CD8-positive, alpha-beta T cell (primary cell): ENCODE measurements at regions of chr1 and their contacts with region 1.

Region 1: GRCh38 chr1:64966158-64966971 is at the start of gene JAK1:
- DNase-seq: peak; percentile 77 to 95 (median 92)
- ATAC-seq: peak; percentile 83
- H3K4me3 ChIP-seq: peak within 1 kb of the TSS; percentile 81 to 95
- H3K4me3 Mint-ChIP-seq: peak within 1 kb of the TSS; percentile 92
- H3K27ac ChIP-seq: peak within 1 kb of the TSS; percentile 87 to 97
- H3K27ac Mint-ChIP-seq: peak within 1 kb of the TSS; percentile 97
- H3K4me1 ChIP-seq: peaks cover 51% of the 10 kb centered on the region
- H3K4me1 Mint-ChIP-seq: peaks cover 51% of the 10 kb centered on the region
- H3K27me3 ChIP-seq: no peaks in the 10 kb centered on the region
- H3K27me3 Mint-ChIP-seq: no peaks in the 10 kb centered on the region
- CTCF ChIP-seq: no peak
- total RNA-seq, gene JAK1: 280 to 298 TPM

Region 2: GRCh38 chr1:64864018-64864940 is 102.1 kb before region 1 on chr1:
- CTCF ChIA-PET with region 1: no interaction called
- POLR2A ChIA-PET with region 1: interaction called, 16 read pairs
- intact Hi-C with region 1: loop called in 1 of 2 experiments (anchors 5 kb)
- DNase-seq: peak; percentile 11 to 92 (median 57)
- ATAC-seq: peak; percentile 82
- H3K4me3 ChIP-seq: no peak overlapping the region
- H3K4me3 Mint-ChIP-seq: peak overlapping the region; percentile 37
- H3K27ac ChIP-seq: peak overlapping the region in 1 of 2 experiments; percentile 83
- H3K27ac Mint-ChIP-seq: peak overlapping the region; percentile 79
- H3K4me1 ChIP-seq: peaks cover 19% of the 10 kb centered on the region
- H3K4me1 Mint-ChIP-seq: peaks cover 44% of the 10 kb centered on the region
- H3K27me3 ChIP-seq: no peaks in the 10 kb centered on the region
- H3K27me3 Mint-ChIP-seq: no peaks in the 10 kb centered on the region
- CTCF ChIP-seq: no peak

Region 3: DNA sequence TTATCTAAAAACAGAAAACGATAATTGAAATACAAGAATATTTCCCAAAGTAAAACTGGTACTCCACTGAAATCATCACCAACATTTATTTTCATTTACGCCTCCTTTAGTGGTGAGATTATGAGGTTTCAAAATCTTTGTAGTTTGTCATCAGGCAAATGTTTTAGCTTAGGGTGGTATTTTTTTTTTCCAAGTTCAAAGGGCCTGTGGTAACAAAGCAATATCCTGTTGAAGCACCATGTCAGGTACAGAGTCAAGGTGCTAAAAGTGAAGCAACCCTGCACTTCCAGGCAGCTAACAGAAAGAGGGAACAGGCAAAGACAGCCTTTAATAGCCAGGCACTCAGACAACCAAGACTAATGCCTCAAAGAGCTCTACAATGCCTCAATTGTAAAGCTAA is 89.2 kb before region 1 on chr1:
- CTCF ChIA-PET with region 1: interaction called, 8 read pairs
- POLR2A ChIA-PET with region 1: interaction called, 37 read pairs
- intact Hi-C with region 1: loop called (anchors 1 to 2 kb)
- DNase-seq: peak in 6 of 9 experiments; percentile 33 to 92 (median 54)
- ATAC-seq: peak; percentile 93
- H3K4me3 ChIP-seq: no peak overlapping the region
- H3K4me3 Mint-ChIP-seq: peak overlapping the region; percentile 69
- H3K27ac ChIP-seq: peak overlapping the region in 1 of 2 experiments; percentile 51
- H3K27ac Mint-ChIP-seq: peak overlapping the region; percentile 82
- H3K4me1 ChIP-seq: peaks cover 48% of the 10 kb centered on the region
- H3K4me1 Mint-ChIP-seq: peaks cover 79% of the 10 kb centered on the region
- H3K27me3 ChIP-seq: no peaks in the 10 kb centered on the region
- H3K27me3 Mint-ChIP-seq: no peaks in the 10 kb centered on the region
- CTCF ChIP-seq: no peak

Region 4: DNA sequence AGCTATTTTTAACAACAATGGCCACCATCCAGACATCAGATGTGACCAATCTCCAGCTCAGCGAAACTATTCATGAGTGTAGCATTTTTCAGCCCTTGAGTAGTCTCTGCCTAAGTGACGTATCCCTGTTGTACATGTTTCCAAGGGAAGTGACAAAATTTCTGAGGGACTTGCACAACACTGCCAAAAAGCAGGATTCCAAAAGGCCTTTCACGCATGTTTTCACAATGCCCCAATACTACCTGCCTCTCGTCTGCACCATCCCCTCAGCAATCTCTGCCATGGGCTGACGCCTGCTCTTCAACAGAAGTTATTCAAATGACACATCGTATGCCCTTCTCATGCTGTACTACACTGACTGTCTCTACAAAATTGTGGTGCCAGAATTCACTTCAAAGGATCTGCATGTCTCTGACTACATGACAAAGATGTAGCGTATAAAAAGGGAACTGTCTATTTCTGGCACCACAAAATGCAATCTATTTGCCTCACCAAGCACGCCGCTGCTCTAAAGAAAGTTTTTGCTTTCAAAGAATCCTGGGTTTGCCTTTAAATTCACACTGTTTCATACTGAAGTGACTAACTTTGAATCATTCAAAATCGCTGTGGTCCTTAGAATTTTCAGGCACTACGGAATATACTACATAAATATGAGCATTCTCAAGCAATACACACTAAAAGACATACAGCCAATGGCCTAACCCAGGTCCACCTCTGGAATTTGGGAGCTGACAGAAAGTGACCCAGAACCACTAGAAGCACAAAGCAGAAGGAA is 32.9 kb before region 1 on chr1:
- CTCF ChIA-PET with region 1: no interaction called
- POLR2A ChIA-PET with region 1: interaction called, 6 read pairs
- intact Hi-C with region 1: loop called in 1 of 2 experiments (anchors 5 kb)
- DNase-seq: peak in 2 of 9 experiments; percentile 36 to 49
- ATAC-seq: peak; percentile 82
- H3K4me3 ChIP-seq: no peak overlapping the region
- H3K4me3 Mint-ChIP-seq: peak overlapping the region; percentile 16
- H3K27ac ChIP-seq: peak overlapping the region in 1 of 2 experiments; percentile 5
- H3K27ac Mint-ChIP-seq: peak overlapping the region; percentile 38
- H3K4me1 ChIP-seq: peaks cover 57% of the 10 kb centered on the region
- H3K4me1 Mint-ChIP-seq: peaks cover 85% of the 10 kb centered on the region
- H3K27me3 ChIP-seq: no peaks in the 10 kb centered on the region
- H3K27me3 Mint-ChIP-seq: no peaks in the 10 kb centered on the region
- CTCF ChIP-seq: no peak

Region 5: DNA sequence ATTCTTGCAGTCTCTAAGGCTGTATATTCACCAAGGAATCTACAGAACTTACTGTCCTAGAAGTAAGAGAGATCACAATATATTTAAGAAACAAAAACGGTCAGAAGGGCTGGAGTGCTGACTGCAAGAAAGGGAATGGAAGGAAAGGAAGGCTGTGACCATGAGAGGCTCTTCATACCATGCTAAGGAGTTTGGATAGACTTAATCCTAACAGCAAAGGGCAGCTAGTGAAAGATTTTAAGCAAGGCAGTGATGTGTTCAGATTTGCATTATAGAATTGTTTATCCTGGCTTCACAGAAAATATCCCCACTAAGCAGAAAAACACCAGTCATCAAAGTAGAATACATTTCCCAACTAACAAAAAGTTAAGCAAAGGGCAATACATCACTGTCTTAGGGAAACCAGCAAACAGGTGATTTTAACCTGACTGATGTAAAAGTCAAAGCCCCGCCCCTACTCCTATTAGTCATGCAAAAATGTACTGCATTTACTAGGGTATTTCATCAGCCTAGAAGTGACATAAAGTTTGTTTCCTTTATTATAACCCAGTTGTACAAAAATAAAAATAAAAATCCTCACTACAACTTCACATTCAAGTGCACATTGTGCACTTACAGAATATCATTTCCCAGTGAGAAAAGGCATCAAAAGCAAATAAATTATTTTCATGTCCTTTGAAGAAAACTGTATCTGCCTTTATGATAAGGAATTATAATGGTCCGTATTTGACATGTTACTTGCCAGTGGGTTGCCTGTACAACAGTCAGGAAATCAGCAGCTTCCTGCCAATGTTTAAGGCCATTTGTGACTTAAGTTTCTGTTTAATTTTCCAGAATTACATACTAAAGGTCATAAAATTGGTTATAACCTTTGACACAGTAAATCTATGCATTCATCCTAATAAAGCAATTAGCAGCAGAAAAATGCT is 17.2 kb before region 1 on chr1:
- CTCF ChIA-PET with region 1: no interaction called
- POLR2A ChIA-PET with region 1: interaction called, 18 read pairs
- intact Hi-C with region 1: loop called (anchors 2 kb)
- DNase-seq: peak in 5 of 9 experiments; percentile 30 to 65 (median 49)
- ATAC-seq: peak; percentile 91
- H3K4me3 ChIP-seq: no peak overlapping the region
- H3K4me3 Mint-ChIP-seq: peak overlapping the region; percentile 42
- H3K27ac ChIP-seq: peak overlapping the region in 1 of 2 experiments; percentile 24
- H3K27ac Mint-ChIP-seq: peak overlapping the region; percentile 75
- H3K4me1 ChIP-seq: peaks cover 71% of the 10 kb centered on the region
- H3K4me1 Mint-ChIP-seq: peaks cover 85% of the 10 kb centered on the region
- H3K27me3 ChIP-seq: no peaks in the 10 kb centered on the region
- H3K27me3 Mint-ChIP-seq: no peaks in the 10 kb centered on the region
- CTCF ChIP-seq: no peak

Region 6: DNA sequence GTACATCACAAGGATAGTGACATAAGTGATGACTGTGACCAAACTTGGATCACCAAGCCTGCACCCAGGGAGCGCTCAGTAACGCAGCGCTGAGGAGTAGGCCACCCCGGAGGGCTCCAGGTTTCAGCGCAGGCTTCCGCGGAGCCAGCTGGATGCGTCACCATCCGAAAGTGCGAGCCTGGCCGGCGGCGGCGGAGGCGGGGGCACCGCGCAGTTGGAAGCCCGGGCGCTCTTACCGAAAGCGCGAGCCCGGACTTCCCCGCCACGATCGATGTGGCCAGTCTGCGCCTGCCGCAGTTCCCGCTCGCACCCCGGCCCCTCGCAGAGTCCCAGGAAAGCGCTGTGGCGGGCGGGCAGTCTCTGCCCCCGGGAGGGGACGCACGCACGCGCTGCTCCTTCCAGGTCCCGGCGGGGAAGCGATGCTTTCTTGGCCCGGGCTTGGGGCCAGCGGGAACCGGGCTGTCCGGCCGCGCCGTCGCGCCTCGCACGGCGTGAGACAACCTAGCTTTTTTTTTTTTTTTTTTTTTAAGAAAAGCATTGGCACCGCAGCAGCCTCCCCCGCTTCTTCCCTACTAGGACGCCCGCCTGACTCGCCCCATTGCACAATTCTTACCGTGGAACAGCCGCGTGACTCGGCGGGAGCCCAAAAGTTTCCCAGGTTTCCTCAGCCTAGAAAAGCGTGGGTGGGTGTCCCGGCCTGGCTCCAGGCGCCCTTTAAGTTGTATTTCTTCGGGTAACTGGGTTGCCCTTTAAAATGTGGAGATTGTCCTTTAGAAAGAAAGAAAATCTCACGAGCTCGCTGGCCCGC is 36.3 kb after region 1 on chr1:
- CTCF ChIA-PET with region 1: interaction called, 4 read pairs
- POLR2A ChIA-PET with region 1: interaction called, 14 read pairs
- intact Hi-C with region 1: loop called (anchors 1 kb)
- DNase-seq: peak; percentile 42 to 91 (median 79)
- ATAC-seq: peak; percentile 87
- H3K4me3 ChIP-seq: peak overlapping the region; percentile 56 to 66
- H3K4me3 Mint-ChIP-seq: peak overlapping the region; percentile 84
- H3K27ac ChIP-seq: peak overlapping the region; percentile 10 to 61
- H3K27ac Mint-ChIP-seq: peak overlapping the region; percentile 91
- H3K4me1 ChIP-seq: peaks cover 19% of the 10 kb centered on the region
- H3K4me1 Mint-ChIP-seq: peaks cover 30% of the 10 kb centered on the region
- H3K27me3 ChIP-seq: peaks cover 0 to 2% of the 10 kb centered on the region in 2 experiments
- H3K27me3 Mint-ChIP-seq: no peaks in the 10 kb centered on the region
- CTCF ChIP-seq: no peak

Region 7: GRCh38 chr1:65419681-65420589 is 453.6 kb after region 1 on chr1:
- CTCF ChIA-PET with region 1: no interaction called
- POLR2A ChIA-PET with region 1: no interaction called
- intact Hi-C with region 1: loop called in 1 of 2 experiments (anchors 5 kb)
- DNase-seq: peak; percentile 97 to 99 (median 98)
- ATAC-seq: peak; percentile 94
- H3K4me3 ChIP-seq: peak overlapping the region; percentile 96 to 98
- H3K4me3 Mint-ChIP-seq: no peak overlapping the region
- H3K27ac ChIP-seq: peak overlapping the region; percentile 69 to 71
- H3K27ac Mint-ChIP-seq: peak overlapping the region; percentile 93
- H3K4me1 ChIP-seq: peaks cover 15% of the 10 kb centered on the region
- H3K4me1 Mint-ChIP-seq: peaks cover 21% of the 10 kb centered on the region
- H3K27me3 ChIP-seq: peaks cover 0 to 3% of the 10 kb centered on the region in 2 experiments
- H3K27me3 Mint-ChIP-seq: no peaks in the 10 kb centered on the region
- CTCF ChIP-seq: no peak